AG04449 (cell line): ENCODE measurements at regions of chr2 and their contacts with region 1.

Region 1: DNA sequence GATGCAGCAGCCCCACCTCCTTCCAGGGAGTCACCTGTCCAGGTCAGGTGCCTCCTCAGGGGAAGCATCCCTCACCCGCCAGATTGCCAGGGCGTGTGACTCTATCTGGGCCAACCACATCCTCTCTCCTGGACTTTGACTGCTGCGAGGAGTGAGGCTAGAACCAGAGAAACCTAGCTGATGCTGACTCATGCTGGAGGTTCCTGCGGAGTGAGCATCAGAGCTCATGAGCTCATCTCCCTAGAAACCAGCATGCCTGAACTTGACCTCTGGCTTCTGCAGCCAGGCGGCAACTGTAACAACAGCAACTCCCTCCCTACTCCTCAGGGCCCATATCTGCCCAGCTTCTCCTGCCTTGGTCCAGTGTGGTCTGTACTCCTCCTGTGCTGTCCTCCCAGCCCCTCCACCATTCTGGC is 28.3 kb upstream of the NT5DC4 start:
- DNase-seq: peak; percentile 63
- H3K4me3 ChIP-seq: no peak overlapping the region
- CTCF ChIP-seq: no peak

Region 2: GRCh38 chr2:112529757-112530156 is 162.7 kb before region 1 on chr2:
- CTCF ChIA-PET with region 1: no interaction called
- POLR2A ChIA-PET with region 1: no interaction called
- DNase-seq: no peak
- H3K4me3 ChIP-seq: no peak overlapping the region
- CTCF ChIP-seq: no peak

Region 3: DNA sequence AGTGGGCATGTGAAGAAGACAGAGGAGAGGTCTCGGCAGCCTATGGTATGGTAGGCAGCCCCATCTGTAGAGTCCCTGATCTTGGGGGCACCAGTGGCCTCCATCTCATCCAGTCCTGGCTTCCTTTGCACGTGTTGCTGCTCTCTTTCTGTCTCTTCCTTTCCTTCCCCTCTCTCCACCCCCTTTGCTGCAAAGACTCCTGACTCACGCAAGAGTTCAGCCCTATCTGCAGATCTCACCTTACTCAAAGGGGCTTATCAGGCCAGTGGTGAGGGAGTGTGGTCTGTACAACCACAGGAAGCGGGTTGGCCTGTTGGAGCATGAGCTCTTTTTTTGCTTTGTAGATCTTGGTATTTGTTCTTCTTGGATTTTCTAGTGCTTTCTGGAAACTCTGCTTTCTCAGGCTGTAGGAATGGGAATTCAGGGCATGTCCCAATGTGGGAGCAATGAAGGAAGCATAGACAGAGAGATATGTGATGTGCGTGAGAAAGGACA is 13.7 kb after region 1 on chr2:
- CTCF ChIA-PET with region 1: interaction called, 24 read pairs
- POLR2A ChIA-PET with region 1: no interaction called
- DNase-seq: no peak
- H3K4me3 ChIP-seq: no peak overlapping the region
- CTCF ChIP-seq: no peak

Region 4: GRCh38 chr2:112846031-112846430 is 153.5 kb after region 1 on chr2:
- CTCF ChIA-PET with region 1: no interaction called
- POLR2A ChIA-PET with region 1: no interaction called
- DNase-seq: no peak
- H3K4me3 ChIP-seq: no peak overlapping the region
- CTCF ChIP-seq: no peak